ENCODE measurements at regions of chr3 and their contacts with region 1.

Region 1: DNA sequence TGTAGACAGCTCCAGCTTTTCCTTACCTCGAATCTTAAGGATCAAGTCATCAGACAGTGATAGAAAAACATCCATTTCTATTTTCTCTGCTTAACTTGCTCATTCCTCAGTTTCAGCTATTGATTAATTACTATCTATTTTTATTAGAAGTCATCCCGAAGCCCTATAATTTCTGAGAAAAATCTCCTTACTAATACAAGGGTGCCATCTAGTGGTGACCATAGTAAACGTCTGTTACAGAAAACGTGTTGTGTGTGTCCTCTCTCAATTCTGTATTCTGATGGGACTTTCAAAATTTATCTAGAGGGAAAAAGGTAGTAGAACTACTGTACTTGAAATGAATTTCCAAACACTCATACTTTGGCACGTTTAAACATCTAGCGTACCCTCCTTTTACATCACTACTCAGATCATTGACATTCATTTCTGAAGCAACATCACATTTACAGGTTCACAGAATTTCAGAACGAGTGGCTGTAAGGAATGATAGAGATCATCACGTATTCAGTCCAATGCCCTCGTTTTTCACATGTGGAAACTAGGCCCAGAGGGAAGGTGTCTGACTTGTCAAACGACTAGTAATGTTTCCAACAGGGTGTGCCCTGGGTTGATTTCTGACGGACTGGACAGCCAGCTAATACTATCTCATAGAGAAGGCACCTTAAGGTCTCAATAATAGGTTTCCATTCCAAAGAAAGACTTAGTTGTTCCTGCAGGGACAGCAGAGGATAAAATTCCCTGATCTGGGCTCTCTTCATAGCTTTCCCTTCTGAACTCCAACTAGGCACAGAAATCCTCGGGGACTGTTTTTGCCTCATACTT is 25.6 kb downstream of the HACD2 start:
- DNase-seq: peak; percentile 20
- H3K4me3 ChIP-seq: no peak overlapping the region
- H3K27ac ChIP-seq: no peak overlapping the region
- H3K4me1 ChIP-seq: no peaks in the 10 kb centered on the region
- H3K27me3 ChIP-seq: no peaks in the 10 kb centered on the region
- CTCF ChIP-seq: peak; percentile 65 to 83

Region 2: DNA sequence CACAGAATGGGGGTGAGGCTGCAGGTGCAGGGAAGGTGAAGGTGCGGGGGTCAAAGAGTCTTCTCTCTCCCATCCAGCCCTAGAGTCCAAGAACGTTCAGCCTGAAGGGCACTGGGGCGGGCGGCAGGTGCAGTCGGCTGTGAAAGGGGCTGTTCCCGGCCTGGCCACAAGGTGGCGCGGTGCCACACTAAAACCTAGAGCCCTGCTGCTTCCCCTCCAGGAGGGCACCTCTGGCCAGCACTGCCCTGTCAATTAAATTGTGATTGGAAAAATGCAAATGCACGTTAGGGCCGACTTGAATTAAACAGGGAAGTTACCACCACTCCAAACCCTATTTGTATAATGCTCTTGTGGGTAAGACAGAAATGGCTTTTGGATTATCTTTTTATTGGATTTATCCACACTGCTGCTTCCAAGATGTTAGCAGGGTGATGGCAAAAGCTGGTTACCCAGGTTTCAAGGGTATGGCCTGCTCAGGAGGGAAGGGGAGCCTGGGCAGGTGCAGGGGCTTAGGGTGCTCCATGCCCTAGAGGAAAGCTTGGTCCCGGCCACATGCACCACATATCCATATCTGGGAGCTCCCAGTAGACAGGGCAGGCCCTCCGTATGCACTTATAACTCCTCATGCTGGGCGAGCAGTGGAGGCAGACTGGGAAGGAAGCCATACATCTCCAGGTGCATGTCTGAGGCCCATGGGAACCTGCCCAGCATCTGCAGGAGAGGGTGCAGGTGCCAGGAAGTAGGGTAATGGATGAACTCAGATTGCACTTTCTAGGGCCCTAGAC is 230.2 kb before region 1 on chr3:
- CTCF ChIA-PET with region 1: no interaction called
- dilution Hi-C with region 1: no loop called
- in situ Hi-C with region 1: loop called in 1 of 2 experiments (anchors 10 kb)
- intact Hi-C with region 1: loop called (anchors 1 kb)
- DNase-seq: peak; percentile 32
- H3K4me3 ChIP-seq: no peak overlapping the region
- H3K27ac ChIP-seq: no peak overlapping the region
- H3K4me1 ChIP-seq: peaks cover 11% of the 10 kb centered on the region
- H3K27me3 ChIP-seq: no peaks in the 10 kb centered on the region
- CTCF ChIP-seq: peak; percentile 85 to 93

Region 3: DNA sequence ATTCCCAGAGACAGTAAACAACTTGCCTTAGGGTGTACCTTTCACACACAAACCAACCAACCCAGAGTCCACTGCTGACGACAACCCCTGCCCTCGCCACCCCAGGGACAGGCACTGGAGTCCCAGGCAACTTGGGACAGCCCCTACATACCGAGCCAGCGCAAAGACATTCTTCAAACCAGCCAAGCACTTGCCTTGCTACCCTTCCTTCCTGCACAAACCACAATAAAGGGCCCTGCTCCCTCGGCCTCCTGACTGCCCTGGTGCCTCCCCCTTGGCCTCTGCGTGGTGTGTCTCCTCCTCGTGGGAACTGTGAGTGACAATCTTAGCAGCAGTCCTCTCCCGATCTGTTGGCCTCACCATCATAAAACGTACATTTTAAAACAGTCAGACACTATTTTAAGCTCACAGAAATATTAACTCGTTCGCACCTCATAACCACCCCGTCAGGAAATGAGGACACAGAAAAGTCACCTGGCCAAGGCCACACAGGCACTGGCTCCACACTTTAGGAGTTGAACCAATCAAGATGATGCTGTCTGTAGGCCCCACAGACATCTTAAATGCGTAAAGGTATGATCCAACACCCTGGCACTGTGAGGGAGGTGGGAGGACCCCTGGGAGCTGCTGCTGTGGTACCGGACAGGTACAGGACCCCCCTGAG is 224.1 kb before region 1 on chr3:
- CTCF ChIA-PET with region 1: no interaction called
- dilution Hi-C with region 1: no loop called
- in situ Hi-C with region 1: loop called in 1 of 2 experiments (anchors 10 kb)
- intact Hi-C with region 1: no loop called
- DNase-seq: no peak
- H3K4me3 ChIP-seq: no peak overlapping the region
- H3K27ac ChIP-seq: no peak overlapping the region
- H3K4me1 ChIP-seq: peaks cover 11% of the 10 kb centered on the region
- H3K27me3 ChIP-seq: no peaks in the 10 kb centered on the region
- CTCF ChIP-seq: no peak

Region 4: GRCh38 chr3:123449102-123449996 is 109.9 kb before region 1 on chr3:
- CTCF ChIA-PET with region 1: no interaction called
- dilution Hi-C with region 1: no loop called
- in situ Hi-C with region 1: no loop called
- intact Hi-C with region 1: loop called (anchors 2 kb)
- DNase-seq: peak; percentile 13
- H3K4me3 ChIP-seq: peak overlapping the region; percentile 37 to 41 (median 40)
- H3K27ac ChIP-seq: no peak overlapping the region
- H3K4me1 ChIP-seq: peaks cover 8% of the 10 kb centered on the region
- H3K27me3 ChIP-seq: peaks cover 29% of the 10 kb centered on the region
- CTCF ChIP-seq: no peak

Region 5: GRCh38 chr3:123489400-123490004 is 69.7 kb before region 1 on chr3:
- CTCF ChIA-PET with region 1: no interaction called
- dilution Hi-C with region 1: no loop called
- in situ Hi-C with region 1: no loop called
- intact Hi-C with region 1: loop called (anchors 5 kb)
- DNase-seq: peak; percentile 23
- H3K4me3 ChIP-seq: no peak overlapping the region
- H3K27ac ChIP-seq: no peak overlapping the region
- H3K4me1 ChIP-seq: no peaks in the 10 kb centered on the region
- H3K27me3 ChIP-seq: no peaks in the 10 kb centered on the region
- CTCF ChIP-seq: peak; percentile 75 to 93

Region 6: DNA sequence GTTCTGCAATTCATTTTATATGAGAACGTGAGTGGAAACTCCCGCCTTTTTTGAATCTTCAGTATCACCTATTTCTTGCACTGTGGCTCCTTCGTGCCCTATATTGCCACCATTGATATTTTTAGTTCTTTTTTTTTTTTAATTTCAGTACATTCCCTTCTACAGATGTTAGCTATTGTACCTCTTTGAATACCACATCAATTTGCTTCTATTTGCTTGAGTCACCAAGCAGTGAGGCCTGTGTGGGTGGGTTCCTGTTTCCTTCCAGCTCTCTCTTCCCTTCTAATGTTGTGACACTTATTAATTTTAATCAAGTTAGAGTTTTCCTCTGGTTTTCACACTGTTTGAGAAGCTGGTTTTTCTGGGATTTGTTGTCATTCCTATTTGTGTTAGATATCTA is 16.9 kb after region 1 on chr3:
- CTCF ChIA-PET with region 1: interaction called, 11 read pairs
- dilution Hi-C with region 1: no loop called
- in situ Hi-C with region 1: no loop called
- intact Hi-C with region 1: no loop called
- DNase-seq: peak; percentile 12
- H3K4me3 ChIP-seq: no peak overlapping the region
- H3K27ac ChIP-seq: no peak overlapping the region
- H3K4me1 ChIP-seq: peaks cover 6% of the 10 kb centered on the region
- H3K27me3 ChIP-seq: no peaks in the 10 kb centered on the region
- CTCF ChIP-seq: no peak

Region 7: GRCh38 chr3:123757281-123757940 is 198.2 kb after region 1 on chr3:
- CTCF ChIA-PET with region 1: no interaction called
- dilution Hi-C with region 1: no loop called
- in situ Hi-C with region 1: no loop called
- intact Hi-C with region 1: no loop called
- DNase-seq: peak; percentile 69
- H3K4me3 ChIP-seq: no peak overlapping the region
- H3K27ac ChIP-seq: no peak overlapping the region
- H3K4me1 ChIP-seq: peaks cover 30% of the 10 kb centered on the region
- H3K27me3 ChIP-seq: no peaks in the 10 kb centered on the region
- CTCF ChIP-seq: no peak

Measured in mammary epithelial cell (primary cell).